CD4-positive, alpha-beta T cell (primary cell): ENCODE measurements at regions of chr11 and their contacts with region 1.

Region 1: GRCh38 chr11:108647701-108648527 is 17.0 kb upstream of the DDX10 start:
- DNase-seq: peak; percentile 42 to 82 (median 56)
- ATAC-seq: peak; percentile 96
- H3K4me3 ChIP-seq: no peak overlapping the region
- H3K4me3 Mint-ChIP-seq: no peak overlapping the region
- H3K27ac ChIP-seq: no peak overlapping the region
- H3K27ac Mint-ChIP-seq: no peak overlapping the region
- H3K4me1 ChIP-seq: no peaks in the 10 kb centered on the region
- H3K4me1 Mint-ChIP-seq: no peaks in the 10 kb centered on the region
- H3K27me3 ChIP-seq: no peaks in the 10 kb centered on the region
- H3K27me3 Mint-ChIP-seq: no peaks in the 10 kb centered on the region
- CTCF ChIP-seq: peak; percentile 78

Region 2: GRCh38 chr11:108008656-108009496 is 639.0 kb before region 1 on chr11 and contains the start of gene CUL5:
- CTCF ChIA-PET with region 1: no interaction called
- POLR2A ChIA-PET with region 1: no interaction called
- intact Hi-C with region 1: loop called (anchors 2 to 5 kb)
- DNase-seq: peak; percentile 76 to 95 (median 86)
- ATAC-seq: peak; percentile 86
- H3K4me3 ChIP-seq: peak within 1 kb of the TSS; percentile 89
- H3K4me3 Mint-ChIP-seq: peak within 1 kb of the TSS; percentile 99
- H3K27ac ChIP-seq: peak within 1 kb of the TSS; percentile 91 to 94
- H3K27ac Mint-ChIP-seq: peak within 1 kb of the TSS; percentile 93
- H3K4me1 ChIP-seq: peaks cover 15% of the 10 kb centered on the region
- H3K4me1 Mint-ChIP-seq: peaks cover 16% of the 10 kb centered on the region
- H3K27me3 ChIP-seq: no peaks in the 10 kb centered on the region
- H3K27me3 Mint-ChIP-seq: no peaks in the 10 kb centered on the region
- CTCF ChIP-seq: peak; percentile 86
- total RNA-seq, gene CUL5: 65.5 to 67.6 TPM

Region 3: DNA sequence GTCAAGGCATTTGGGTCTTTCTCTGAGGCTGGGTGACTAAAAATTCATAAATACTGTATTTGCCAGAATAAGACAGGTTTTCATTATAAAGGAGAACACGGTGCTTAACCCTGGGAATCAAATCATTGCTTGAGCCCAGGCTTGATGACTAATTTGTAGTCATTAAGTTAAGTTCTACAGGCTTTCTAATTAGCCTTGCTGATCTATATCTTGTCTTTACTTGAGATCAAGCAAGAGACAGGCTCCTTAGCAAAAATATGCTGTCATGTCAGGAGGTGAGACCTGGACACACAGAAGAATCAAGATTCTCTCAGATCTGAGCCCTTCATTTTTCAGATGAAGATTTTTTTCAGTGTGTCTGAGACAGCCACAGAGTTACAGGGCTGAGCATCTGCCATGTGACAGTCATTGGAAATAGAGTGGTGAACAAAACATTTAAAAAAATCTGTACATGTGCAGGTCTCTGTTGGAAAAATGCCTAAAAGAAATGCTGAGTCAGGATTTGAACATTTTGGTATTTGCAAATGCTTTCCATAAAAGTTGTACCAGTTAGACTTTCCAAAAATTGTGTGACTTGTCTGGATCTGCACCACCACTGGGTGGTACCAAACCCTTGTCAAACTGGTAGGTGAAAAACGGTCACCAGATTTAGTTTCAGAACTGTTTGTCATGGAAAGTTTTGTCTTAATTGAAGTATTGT is 511.9 kb before region 1 on chr11:
- CTCF ChIA-PET with region 1: no interaction called
- POLR2A ChIA-PET with region 1: no interaction called
- intact Hi-C with region 1: loop called (anchors 1 to 5 kb)
- DNase-seq: peak in 5 of 14 experiments; percentile 7 to 53 (median 35)
- ATAC-seq: peak; percentile 66
- H3K4me3 ChIP-seq: no peak overlapping the region
- H3K4me3 Mint-ChIP-seq: no peak overlapping the region
- H3K27ac ChIP-seq: no peak overlapping the region
- H3K27ac Mint-ChIP-seq: peak overlapping the region; percentile 40
- H3K4me1 ChIP-seq: no peaks in the 10 kb centered on the region
- H3K4me1 Mint-ChIP-seq: peaks cover 21% of the 10 kb centered on the region
- H3K27me3 ChIP-seq: no peaks in the 10 kb centered on the region
- H3K27me3 Mint-ChIP-seq: no peaks in the 10 kb centered on the region
- CTCF ChIP-seq: peak; percentile 23

Region 4: GRCh38 chr11:108414958-108415357 is 233.0 kb before region 1 on chr11:
- CTCF ChIA-PET with region 1: no interaction called
- POLR2A ChIA-PET with region 1: no interaction called
- intact Hi-C with region 1: loop called (anchors 1 to 2 kb)
- DNase-seq: no peak
- ATAC-seq: no peak
- H3K4me3 ChIP-seq: no peak overlapping the region
- H3K4me3 Mint-ChIP-seq: no peak overlapping the region
- H3K27ac ChIP-seq: no peak overlapping the region
- H3K27ac Mint-ChIP-seq: no peak overlapping the region
- H3K4me1 ChIP-seq: no peaks in the 10 kb centered on the region
- H3K4me1 Mint-ChIP-seq: no peaks in the 10 kb centered on the region
- H3K27me3 ChIP-seq: no peaks in the 10 kb centered on the region
- H3K27me3 Mint-ChIP-seq: no peaks in the 10 kb centered on the region
- CTCF ChIP-seq: no peak

Region 5: GRCh38 chr11:108685419-108686130 is 37.7 kb after region 1 on chr11:
- CTCF ChIA-PET with region 1: no interaction called
- POLR2A ChIA-PET with region 1: no interaction called
- intact Hi-C with region 1: no loop called
- DNase-seq: no peak
- ATAC-seq: no peak
- H3K4me3 ChIP-seq: no peak overlapping the region
- H3K4me3 Mint-ChIP-seq: no peak overlapping the region
- H3K27ac ChIP-seq: no peak overlapping the region
- H3K27ac Mint-ChIP-seq: no peak overlapping the region
- H3K4me1 ChIP-seq: no peaks in the 10 kb centered on the region
- H3K4me1 Mint-ChIP-seq: peaks cover 12% of the 10 kb centered on the region
- H3K27me3 ChIP-seq: no peaks in the 10 kb centered on the region
- H3K27me3 Mint-ChIP-seq: no peaks in the 10 kb centered on the region
- CTCF ChIP-seq: no peak

Region 6: DNA sequence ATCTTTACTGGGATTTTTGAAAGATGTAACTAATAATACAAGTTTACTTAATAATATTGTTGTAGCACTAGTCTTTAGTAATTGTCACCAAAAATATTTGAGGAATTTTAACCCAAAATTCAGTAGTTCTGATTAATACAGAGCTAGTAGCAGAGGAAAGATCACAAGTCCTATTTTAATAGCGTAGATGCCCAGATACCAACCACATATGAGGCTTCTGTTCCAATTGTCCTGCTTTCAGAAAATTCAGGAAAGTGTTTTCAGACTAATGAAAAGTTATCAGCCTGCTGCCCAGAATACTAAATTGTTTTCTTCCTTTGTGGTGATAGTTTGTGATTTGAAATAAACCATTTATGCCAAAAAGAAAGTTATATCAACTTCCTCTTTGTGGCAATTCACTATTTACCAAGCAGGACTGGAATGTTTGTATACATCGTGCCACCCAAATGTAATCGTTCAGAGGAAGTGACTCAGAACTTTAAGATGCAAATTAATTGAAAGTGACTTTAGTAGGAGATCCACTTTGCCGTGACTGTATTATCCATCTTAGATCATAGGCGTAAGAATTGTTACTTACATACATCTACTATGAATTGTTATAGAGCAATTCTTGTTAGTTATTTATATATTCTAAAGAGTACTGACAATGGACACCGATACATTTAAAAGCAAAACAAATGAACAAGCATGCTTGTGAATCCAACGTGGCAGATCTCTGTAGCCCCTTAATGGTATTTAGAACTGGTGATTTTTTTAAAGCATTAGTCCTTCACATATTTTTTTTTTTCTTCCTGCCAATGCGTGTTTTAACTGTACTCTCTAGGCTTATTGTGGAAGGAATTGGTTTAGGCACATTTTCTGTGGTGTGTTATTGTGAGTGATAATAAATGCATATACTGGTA is 247.9 kb after region 1 on chr11:
- CTCF ChIA-PET with region 1: no interaction called
- POLR2A ChIA-PET with region 1: no interaction called
- intact Hi-C with region 1: no loop called
- DNase-seq: peak in 2 of 14 experiments; percentile 14 to 34
- ATAC-seq: no peak
- H3K4me3 ChIP-seq: no peak overlapping the region
- H3K4me3 Mint-ChIP-seq: no peak overlapping the region
- H3K27ac ChIP-seq: no peak overlapping the region
- H3K27ac Mint-ChIP-seq: no peak overlapping the region
- H3K4me1 ChIP-seq: no peaks in the 10 kb centered on the region
- H3K4me1 Mint-ChIP-seq: no peaks in the 10 kb centered on the region
- H3K27me3 ChIP-seq: no peaks in the 10 kb centered on the region
- H3K27me3 Mint-ChIP-seq: no peaks in the 10 kb centered on the region
- CTCF ChIP-seq: no peak

Region 7: GRCh38 chr11:109085708-109086373 is 437.9 kb after region 1 on chr11:
- CTCF ChIA-PET with region 1: no interaction called
- POLR2A ChIA-PET with region 1: no interaction called
- intact Hi-C with region 1: no loop called
- DNase-seq: no peak
- ATAC-seq: no peak
- H3K4me3 ChIP-seq: no peak overlapping the region
- H3K4me3 Mint-ChIP-seq: no peak overlapping the region
- H3K27ac ChIP-seq: no peak overlapping the region
- H3K27ac Mint-ChIP-seq: no peak overlapping the region
- H3K4me1 ChIP-seq: no peaks in the 10 kb centered on the region
- H3K4me1 Mint-ChIP-seq: no peaks in the 10 kb centered on the region
- H3K27me3 ChIP-seq: no peaks in the 10 kb centered on the region
- H3K27me3 Mint-ChIP-seq: no peaks in the 10 kb centered on the region
- CTCF ChIP-seq: no peak